ENCODE measurements at regions of chr9 and their contacts with region 1.

Region 1: GRCh38 chr9:115524453-115525059 is 406.6 kb upstream of the TNC start:
- DNase-seq: peak in 1 of 5 donors; percentile 19
- ATAC-seq: peak in 3 of 4 donors; percentile 42 to 58 (median 44)
- H3K4me3 ChIP-seq: no peak overlapping the region
- H3K27ac ChIP-seq: peak overlapping the region in 1 of 12 donors; percentile 35
- H3K4me1 ChIP-seq: peaks cover 0 to 7% (median 0%) of the 10 kb centered on the region in 12 donors
- H3K27me3 ChIP-seq: no peaks in the 10 kb centered on the region
- CTCF ChIP-seq: peak; percentile 31 to 73 (median 51)
- POLR2A ChIP-seq: no peak

Region 2: GRCh38 chr9:114405294-114406034 is 1119.1 kb before region 1 on chr9:
- intact Hi-C with region 1: loop called in 2 of 10 experiments (anchors 10 kb)
- DNase-seq: peak; percentile 73 to 81 (median 79)
- ATAC-seq: peak; percentile 76 to 95 (median 92)
- H3K4me3 ChIP-seq: no peak overlapping the region
- H3K27ac ChIP-seq: no peak overlapping the region
- H3K4me1 ChIP-seq: peaks cover 0 to 7% (median 0%) of the 10 kb centered on the region in 12 donors
- H3K27me3 ChIP-seq: no peaks in the 10 kb centered on the region
- CTCF ChIP-seq: peak; percentile 72 to 87 (median 82)
- POLR2A ChIP-seq: no peak

Region 3: GRCh38 chr9:114681594-114682332 is 842.8 kb before region 1 on chr9 and contains the start of gene TEX48:
- intact Hi-C with region 1: loop called in 1 of 10 experiments (anchors 10 kb)
- DNase-seq: peak in 2 of 5 donors; percentile 38 to 39
- ATAC-seq: peak in 3 of 4 donors; percentile 50 to 74 (median 55)
- H3K4me3 ChIP-seq: no peak within 1 kb of the TSS
- H3K27ac ChIP-seq: no peak within 1 kb of the TSS
- H3K4me1 ChIP-seq: no peaks in the 10 kb centered on the region
- H3K27me3 ChIP-seq: peaks cover 0 to 19% (median 0%) of the 10 kb centered on the region in 9 donors
- CTCF ChIP-seq: peak in 11 of 12 donors; percentile 31 to 53 (median 41)
- POLR2A ChIP-seq: no peak
- total RNA-seq, gene TEX48: not detected

Region 4: DNA sequence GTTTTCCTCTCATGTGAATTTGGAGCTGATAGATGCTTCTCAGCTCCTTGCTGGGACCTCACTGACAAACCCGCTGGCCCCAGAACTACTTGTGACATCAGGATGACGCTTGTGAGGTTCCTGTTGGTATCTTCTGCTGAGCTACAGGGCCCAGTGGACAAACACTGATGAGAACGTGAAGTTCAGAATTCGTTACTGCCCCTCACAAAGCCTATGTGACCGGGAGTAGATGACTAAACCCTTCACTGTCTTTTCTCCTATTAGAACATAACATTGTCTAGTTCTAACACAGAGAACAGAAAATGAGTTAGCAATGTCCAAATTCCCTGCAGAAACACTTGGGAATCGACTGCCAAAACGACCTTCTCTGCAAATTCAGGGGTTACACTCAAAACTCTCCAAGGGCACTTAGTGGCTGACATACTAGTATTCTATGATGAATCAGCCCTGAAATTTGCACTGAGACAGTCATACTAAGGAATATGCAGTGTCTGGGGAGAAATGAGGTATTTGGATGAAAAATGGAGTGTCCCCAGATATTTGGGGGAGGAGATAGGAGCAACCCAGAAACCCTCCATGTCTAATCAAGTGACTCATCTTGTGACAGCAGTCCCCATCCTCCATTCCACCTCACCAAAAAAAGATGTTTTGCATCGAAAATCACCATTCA is 1019.3 kb after region 1 on chr9:
- intact Hi-C with region 1: no loop called
- DNase-seq: peak in 3 of 5 donors; percentile 42 to 66 (median 46)
- ATAC-seq: peak in 3 of 4 donors; percentile 28 to 86 (median 68)
- H3K4me3 ChIP-seq: no peak overlapping the region
- H3K27ac ChIP-seq: peak overlapping the region in 5 of 12 donors; percentile 2 to 45 (median 29)
- H3K4me1 ChIP-seq: peaks cover 0 to 9% (median 0%) of the 10 kb centered on the region in 12 donors
- H3K27me3 ChIP-seq: no peaks in the 10 kb centered on the region
- CTCF ChIP-seq: no peak
- POLR2A ChIP-seq: no peak